Naive thymus-derived CD4-positive, alpha-beta T cell (primary cell): ENCODE measurements at regions of chr5 and their contacts with region 1.

Region 1: DNA sequence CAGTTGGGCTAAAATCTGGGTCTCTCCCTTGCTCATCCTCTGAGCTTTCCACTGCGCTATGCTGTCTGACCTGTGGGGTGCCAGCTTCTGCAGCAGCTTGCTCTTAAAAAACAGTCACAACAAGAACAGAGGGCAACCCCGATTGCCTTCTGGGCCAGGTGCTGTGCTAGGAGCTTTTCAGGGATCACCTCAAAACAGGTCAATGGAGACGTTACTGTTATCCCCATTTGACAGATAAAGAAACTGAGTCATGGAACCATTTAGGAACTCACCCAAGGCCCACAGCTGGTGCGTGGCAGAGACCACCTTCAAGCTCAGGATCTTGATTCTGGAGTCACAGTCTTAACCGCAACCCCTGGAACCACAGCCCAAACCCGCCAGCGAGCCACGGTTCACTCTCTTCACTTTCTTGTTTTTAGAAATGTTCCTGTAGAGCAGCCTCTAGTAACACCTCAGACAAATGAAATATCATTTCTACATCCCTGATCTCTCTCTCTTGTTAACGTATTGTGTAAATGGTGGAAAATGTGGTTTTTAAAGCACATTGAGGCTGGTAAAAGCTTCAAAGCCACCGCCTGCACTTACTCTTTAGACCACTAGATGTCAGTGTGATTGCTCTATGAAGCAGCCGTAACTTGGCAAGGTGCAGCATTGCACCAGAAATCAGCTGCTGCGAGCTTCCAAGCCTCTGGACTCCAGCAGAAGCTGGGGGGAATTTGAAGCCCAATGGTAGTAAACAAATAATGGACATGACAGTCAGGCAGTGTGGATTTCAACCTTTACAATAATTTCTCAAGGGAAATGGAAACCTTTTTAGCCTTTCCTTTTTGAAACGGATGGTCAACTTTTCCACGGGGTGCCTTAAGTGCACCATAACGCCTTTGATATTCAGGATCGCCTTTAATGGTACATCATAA is 1.7 kb downstream of the FYB1 start:
- DNase-seq: peak in 8 of 9 donors; percentile 68 to 88 (median 83)
- ATAC-seq: peak; percentile 86
- H3K4me3 ChIP-seq: peak overlapping the region; percentile 74
- H3K4me3 Mint-ChIP-seq: peak overlapping the region; percentile 82 to 98 (median 86)
- H3K27ac ChIP-seq: peak overlapping the region; percentile 93
- H3K27ac Mint-ChIP-seq: peak overlapping the region; percentile 84 to 99 (median 94)
- H3K4me1 ChIP-seq: peaks cover 45 to 49% of the 10 kb centered on the region in 2 donors
- H3K4me1 Mint-ChIP-seq: peaks cover 44 to 89% (median 77%) of the 10 kb centered on the region in 7 donors
- H3K27me3 ChIP-seq: no peaks in the 10 kb centered on the region
- H3K27me3 Mint-ChIP-seq: no peaks in the 10 kb centered on the region

Region 2: DNA sequence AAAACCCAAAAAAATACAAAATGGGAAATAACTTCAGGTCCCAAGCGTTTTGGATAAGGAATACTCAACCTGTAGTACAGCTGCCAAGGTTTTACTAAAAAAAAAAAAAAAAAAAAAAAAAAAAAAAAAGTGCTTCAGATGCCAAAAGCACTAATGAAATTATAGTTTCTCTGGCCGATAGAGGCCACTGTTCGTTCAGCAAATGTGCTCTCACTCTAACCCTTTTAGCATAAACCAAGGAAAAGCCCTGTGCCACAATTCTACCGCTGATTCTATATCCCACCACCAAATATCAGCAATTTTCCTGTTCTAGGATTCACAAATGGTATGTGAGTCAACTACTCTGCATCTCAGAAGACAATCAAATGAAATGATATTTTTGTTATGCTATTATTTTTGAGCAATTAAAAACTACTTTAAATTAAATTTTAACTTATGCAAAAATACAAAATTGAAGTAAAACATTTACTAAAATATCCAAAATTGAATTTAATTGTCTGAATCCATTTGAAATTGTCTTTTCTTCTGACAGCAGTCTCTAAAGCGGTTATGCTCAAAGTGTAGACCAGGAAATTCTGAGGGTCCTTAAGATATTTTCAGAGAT is 223.2 kb before region 1 on chr5:
- CTCF ChIA-PET with region 1: no interaction called
- POLR2A ChIA-PET with region 1: no interaction called
- intact Hi-C with region 1: loop called in 1 of 2 experiments (anchors 5 kb)
- DNase-seq: peak in 7 of 9 donors; percentile 2 to 57 (median 39)
- ATAC-seq: peak; percentile 63
- H3K4me3 ChIP-seq: no peak overlapping the region
- H3K4me3 Mint-ChIP-seq: no peak overlapping the region
- H3K27ac ChIP-seq: no peak overlapping the region
- H3K27ac Mint-ChIP-seq: peak overlapping the region in 1 of 9 donors; percentile 75
- H3K4me1 ChIP-seq: no peaks in the 10 kb centered on the region
- H3K4me1 Mint-ChIP-seq: peaks cover 4 to 39% (median 25%) of the 10 kb centered on the region in 7 donors
- H3K27me3 ChIP-seq: no peaks in the 10 kb centered on the region
- H3K27me3 Mint-ChIP-seq: no peaks in the 10 kb centered on the region

Region 3: DNA sequence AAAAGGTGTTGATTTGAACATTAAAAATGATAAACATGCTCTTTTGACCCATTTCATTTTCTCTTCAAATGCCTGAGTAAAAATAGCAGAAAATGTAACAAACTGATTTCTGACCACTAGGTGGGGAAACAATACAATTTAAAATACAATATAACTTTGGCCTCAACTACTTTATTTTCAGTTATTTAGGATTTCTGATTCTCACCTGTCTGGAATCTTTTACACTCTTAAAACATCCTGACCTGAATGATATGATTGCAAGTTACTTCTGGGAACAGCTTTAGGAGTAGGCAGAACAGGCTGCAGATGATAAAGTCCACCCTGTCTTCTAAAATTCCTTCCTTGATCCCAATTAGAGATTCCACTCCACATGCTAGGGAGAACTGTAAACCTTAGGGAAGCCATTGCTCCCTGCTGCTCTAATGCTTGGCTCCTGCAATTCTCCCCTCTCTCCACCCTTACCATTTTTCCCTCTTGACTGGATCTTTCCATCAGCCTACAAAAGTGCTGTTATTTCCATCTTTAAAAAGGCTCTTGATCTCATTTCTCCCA is 68.6 kb before region 1 on chr5:
- CTCF ChIA-PET with region 1: interaction called, 19 read pairs
- POLR2A ChIA-PET with region 1: interaction called, 11 read pairs
- intact Hi-C with region 1: loop called (anchors 1 kb)
- DNase-seq: peak in 6 of 9 donors; percentile 28 to 55 (median 48)
- ATAC-seq: peak; percentile 44
- H3K4me3 ChIP-seq: no peak overlapping the region
- H3K4me3 Mint-ChIP-seq: peak overlapping the region in 6 of 10 donors; percentile 7 to 63 (median 36)
- H3K27ac ChIP-seq: peak overlapping the region; percentile 64
- H3K27ac Mint-ChIP-seq: peak overlapping the region; percentile 66 to 94 (median 82)
- H3K4me1 ChIP-seq: peaks cover 19 to 55% of the 10 kb centered on the region in 2 donors
- H3K4me1 Mint-ChIP-seq: peaks cover 58 to 90% (median 72%) of the 10 kb centered on the region in 7 donors
- H3K27me3 ChIP-seq: no peaks in the 10 kb centered on the region
- H3K27me3 Mint-ChIP-seq: no peaks in the 10 kb centered on the region

Region 4: DNA sequence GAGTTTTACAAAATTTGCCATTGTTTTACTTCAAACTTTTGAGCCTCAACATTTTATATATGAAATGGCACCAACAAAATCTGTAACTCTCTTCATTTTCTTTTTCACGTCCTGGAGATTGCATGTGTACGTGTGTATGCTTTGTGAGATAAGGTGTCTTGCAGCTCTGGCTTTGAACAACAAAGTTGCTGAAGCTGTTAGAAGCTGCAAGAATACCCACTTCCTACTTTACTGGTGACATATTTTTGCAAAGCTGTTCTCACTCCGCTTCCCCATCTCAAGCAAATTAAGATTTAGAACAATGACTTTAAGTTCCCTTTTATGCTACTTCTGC is 40.0 kb before region 1 on chr5:
- CTCF ChIA-PET with region 1: interaction called, 85 read pairs
- POLR2A ChIA-PET with region 1: interaction called, 77 read pairs
- intact Hi-C with region 1: loop called in 1 of 2 experiments (anchors 1 kb)
- DNase-seq: peak in 7 of 9 donors; percentile 61 to 86 (median 79)
- ATAC-seq: peak; percentile 79
- H3K4me3 ChIP-seq: peak overlapping the region; percentile 46
- H3K4me3 Mint-ChIP-seq: peak overlapping the region; percentile 58 to 86 (median 80)
- H3K27ac ChIP-seq: peak overlapping the region; percentile 72
- H3K27ac Mint-ChIP-seq: peak overlapping the region; percentile 87 to 98 (median 96)
- H3K4me1 ChIP-seq: peaks cover 94 to 95% of the 10 kb centered on the region in 2 donors
- H3K4me1 Mint-ChIP-seq: peaks cover 84 to 100% (median 96%) of the 10 kb centered on the region in 7 donors
- H3K27me3 ChIP-seq: no peaks in the 10 kb centered on the region
- H3K27me3 Mint-ChIP-seq: no peaks in the 10 kb centered on the region

Region 5: DNA sequence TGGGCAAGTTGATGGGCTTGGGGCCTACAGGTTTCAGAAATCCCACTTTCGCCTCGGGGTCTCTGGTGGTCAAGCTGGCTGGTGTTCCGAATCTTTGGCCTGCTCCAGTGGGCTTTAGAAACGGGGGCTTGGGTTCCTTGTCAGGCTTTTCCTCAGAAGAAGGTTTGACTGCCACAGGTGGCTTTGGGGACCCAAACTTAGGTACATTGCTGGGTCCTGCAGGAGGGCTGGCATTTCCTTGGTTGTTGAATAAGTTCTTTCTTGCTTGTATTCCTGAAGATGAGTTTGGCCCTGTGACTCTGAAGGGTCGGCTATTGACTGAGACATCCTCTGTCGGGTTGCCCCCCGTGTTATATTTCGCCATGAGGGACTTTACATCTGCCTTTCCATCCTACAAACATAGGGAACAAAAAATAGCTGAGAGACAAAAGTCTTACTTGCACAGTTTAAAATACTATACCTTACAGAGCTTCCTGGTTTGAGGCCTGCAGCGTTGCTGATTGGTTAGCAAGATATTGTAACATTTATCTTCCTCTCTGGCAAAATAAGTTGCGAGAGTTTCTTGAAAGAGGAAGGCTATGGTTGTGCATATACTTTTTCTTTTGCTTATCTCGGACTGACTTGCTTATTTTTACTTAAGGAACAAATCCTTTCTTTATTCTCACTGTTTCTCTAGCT is 14.9 kb before region 1 on chr5:
- CTCF ChIA-PET with region 1: interaction called, 168 read pairs
- POLR2A ChIA-PET with region 1: interaction called, 211 read pairs
- intact Hi-C with region 1: loop called (anchors 1 to 2 kb)
- DNase-seq: peak in 7 of 9 donors; percentile 57 to 72 (median 66)
- ATAC-seq: peak; percentile 82
- H3K4me3 ChIP-seq: peak overlapping the region; percentile 82
- H3K4me3 Mint-ChIP-seq: peak overlapping the region; percentile 75 to 100 (median 96)
- H3K27ac ChIP-seq: peak overlapping the region; percentile 93
- H3K27ac Mint-ChIP-seq: peak overlapping the region; percentile 86 to 99 (median 98)
- H3K4me1 ChIP-seq: peaks cover 43 to 48% of the 10 kb centered on the region in 2 donors
- H3K4me1 Mint-ChIP-seq: peaks cover 28 to 45% (median 44%) of the 10 kb centered on the region in 7 donors
- H3K27me3 ChIP-seq: no peaks in the 10 kb centered on the region
- H3K27me3 Mint-ChIP-seq: no peaks in the 10 kb centered on the region

Region 6: DNA sequence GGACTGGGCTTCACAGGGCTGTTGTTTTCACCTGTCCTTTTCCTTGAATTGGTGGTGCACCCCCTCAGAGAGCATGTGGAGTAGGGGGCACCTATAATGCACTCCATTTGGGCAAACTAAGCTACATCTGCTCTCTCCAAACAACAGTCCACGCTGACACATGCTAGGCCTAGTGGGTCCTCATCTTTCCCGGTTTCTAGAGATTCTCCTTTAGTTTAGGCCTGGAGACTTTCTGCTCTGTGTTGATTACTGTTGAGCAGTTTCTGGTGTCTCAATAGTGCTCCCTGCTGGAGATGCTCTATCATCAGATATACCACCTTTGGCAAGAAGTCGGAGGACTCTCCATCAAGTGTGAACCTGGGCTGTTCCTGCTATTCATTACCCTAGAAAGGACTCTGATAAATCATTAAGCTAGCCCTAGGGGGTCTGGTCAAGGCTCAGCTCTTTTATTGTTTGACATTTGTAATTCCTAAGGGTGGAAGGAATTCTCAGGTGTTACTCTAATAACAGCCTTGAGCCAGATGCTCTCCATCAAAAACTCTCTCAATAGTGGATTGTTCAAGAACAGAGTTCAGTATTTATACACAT is 65.7 kb after region 1 on chr5:
- CTCF ChIA-PET with region 1: interaction called, 192 read pairs
- POLR2A ChIA-PET with region 1: interaction called, 34 read pairs
- intact Hi-C with region 1: loop called (anchors 1 kb)
- DNase-seq: peak; percentile 14 to 83 (median 73)
- ATAC-seq: peak; percentile 99
- H3K4me3 ChIP-seq: no peak overlapping the region
- H3K4me3 Mint-ChIP-seq: peak overlapping the region in 8 of 10 donors; percentile 8 to 66 (median 57)
- H3K27ac ChIP-seq: peak overlapping the region; percentile 3
- H3K27ac Mint-ChIP-seq: peak overlapping the region in 8 of 9 donors; percentile 66 to 98 (median 86)
- H3K4me1 ChIP-seq: peaks cover 4 to 7% of the 10 kb centered on the region in 2 donors
- H3K4me1 Mint-ChIP-seq: peaks cover 18 to 52% (median 46%) of the 10 kb centered on the region in 7 donors
- H3K27me3 ChIP-seq: no peaks in the 10 kb centered on the region
- H3K27me3 Mint-ChIP-seq: peaks cover 0 to 23% (median 8%) of the 10 kb centered on the region in 5 donors

Region 7: GRCh38 chr5:39570403-39571027 is 352.9 kb after region 1 on chr5:
- CTCF ChIA-PET with region 1: interaction called, 5 read pairs
- POLR2A ChIA-PET with region 1: no interaction called
- intact Hi-C with region 1: loop called in 1 of 2 experiments (anchors 1 kb)
- DNase-seq: peak in 5 of 9 donors; percentile 8 to 31 (median 27)
- ATAC-seq: peak; percentile 36
- H3K4me3 ChIP-seq: no peak overlapping the region
- H3K4me3 Mint-ChIP-seq: no peak overlapping the region
- H3K27ac ChIP-seq: no peak overlapping the region
- H3K27ac Mint-ChIP-seq: no peak overlapping the region
- H3K4me1 ChIP-seq: no peaks in the 10 kb centered on the region
- H3K4me1 Mint-ChIP-seq: peaks cover 0 to 3% (median 0%) of the 10 kb centered on the region in 7 donors
- H3K27me3 ChIP-seq: no peaks in the 10 kb centered on the region
- H3K27me3 Mint-ChIP-seq: peaks cover 0 to 29% (median 10%) of the 10 kb centered on the region in 5 donors